Activated T-helper 2 cell treated with anti-CD3 and anti-CD28 coated beads, Interferon-gamma antibody, Interleukin-2, Interleukin-4, amounts not matched to agents 10 μg/mL and 5 μg/mL and 100 μg/mL, durations not matched to agents 14 hours and 24 hours and 36 hours (primary cell): ENCODE measurements at regions of chr3 and their contacts with region 1.

Region 1: DNA sequence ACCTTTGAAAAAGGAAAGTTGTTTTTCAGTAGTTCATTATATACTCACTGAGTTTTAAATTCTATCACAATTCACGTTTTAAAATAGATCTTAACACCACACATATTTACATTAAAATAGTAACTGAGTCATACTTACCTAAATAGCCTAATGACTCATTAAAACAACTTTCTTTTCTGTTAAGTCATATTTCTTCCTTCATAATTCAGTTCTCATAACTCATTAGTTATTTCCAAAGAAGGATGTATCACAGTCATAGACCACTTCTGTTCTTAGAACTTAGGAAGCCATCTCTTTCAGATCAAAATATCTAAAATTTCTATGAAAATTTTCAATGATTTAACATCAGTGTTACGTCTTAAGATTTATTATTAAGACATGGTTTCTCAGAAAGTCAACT is 885.9 kb downstream of the FHIT start:
- DNase-seq: no peak
- H3K4me3 Mint-ChIP-seq: no peak overlapping the region
- H3K27ac Mint-ChIP-seq: no peak overlapping the region
- H3K4me1 Mint-ChIP-seq: peaks cover 25% of the 10 kb centered on the region
- H3K27me3 Mint-ChIP-seq: no peaks in the 10 kb centered on the region

Region 2: GRCh38 chr3:59873576-59874230 is 491.7 kb before region 1 on chr3:
- intact Hi-C with region 1: loop called (anchors 10 kb)
- DNase-seq: no peak
- H3K4me3 Mint-ChIP-seq: no peak overlapping the region
- H3K27ac Mint-ChIP-seq: peak overlapping the region; percentile 9
- H3K4me1 Mint-ChIP-seq: peaks cover 52% of the 10 kb centered on the region
- H3K27me3 Mint-ChIP-seq: no peaks in the 10 kb centered on the region

Region 3: GRCh38 chr3:60017631-60018030 is 347.7 kb before region 1 on chr3:
- intact Hi-C with region 1: loop called (anchors 5 kb)
- DNase-seq: peak; percentile 63
- H3K4me3 Mint-ChIP-seq: peak overlapping the region; percentile 61
- H3K27ac Mint-ChIP-seq: peak overlapping the region; percentile 98
- H3K4me1 Mint-ChIP-seq: peaks cover 64% of the 10 kb centered on the region
- H3K27me3 Mint-ChIP-seq: no peaks in the 10 kb centered on the region

Region 4: DNA sequence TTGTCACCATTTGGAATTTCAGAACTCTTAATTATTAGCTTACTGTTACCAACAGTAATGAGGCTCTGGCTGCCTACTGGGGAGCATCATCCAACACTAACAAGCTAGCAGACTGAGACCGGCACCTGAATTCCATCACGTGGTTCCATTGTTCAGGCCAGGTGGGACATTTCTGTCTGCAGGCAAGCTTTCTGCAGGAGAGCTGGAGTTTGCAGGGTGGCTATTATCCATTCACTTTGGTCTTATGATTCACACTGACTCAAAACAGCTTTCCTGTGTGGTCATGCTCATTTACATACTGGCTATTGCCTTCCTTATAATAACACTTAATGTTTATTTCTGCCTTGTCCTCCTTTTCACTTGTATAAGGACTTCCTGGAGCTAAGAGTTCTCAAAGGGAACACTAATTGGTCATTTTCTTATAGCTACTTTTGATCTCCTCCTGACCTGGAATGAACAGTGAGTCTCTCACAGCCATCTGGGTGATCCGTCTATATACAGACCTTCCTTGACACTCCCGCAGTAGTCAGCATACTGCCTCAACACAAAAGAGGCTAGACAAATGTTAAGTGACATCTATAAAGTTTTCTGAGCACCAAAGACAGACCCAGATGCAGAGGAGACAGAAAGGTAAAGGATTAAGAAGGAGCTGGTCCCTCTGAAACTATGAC is 190.5 kb after region 1 on chr3:
- intact Hi-C with region 1: loop called (anchors 5 kb)
- DNase-seq: no peak
- H3K4me3 Mint-ChIP-seq: no peak overlapping the region
- H3K27ac Mint-ChIP-seq: no peak overlapping the region
- H3K4me1 Mint-ChIP-seq: peaks cover 34% of the 10 kb centered on the region
- H3K27me3 Mint-ChIP-seq: no peaks in the 10 kb centered on the region